ENCODE measurements at regions of chrX and their contacts with region 1.

Region 1: DNA sequence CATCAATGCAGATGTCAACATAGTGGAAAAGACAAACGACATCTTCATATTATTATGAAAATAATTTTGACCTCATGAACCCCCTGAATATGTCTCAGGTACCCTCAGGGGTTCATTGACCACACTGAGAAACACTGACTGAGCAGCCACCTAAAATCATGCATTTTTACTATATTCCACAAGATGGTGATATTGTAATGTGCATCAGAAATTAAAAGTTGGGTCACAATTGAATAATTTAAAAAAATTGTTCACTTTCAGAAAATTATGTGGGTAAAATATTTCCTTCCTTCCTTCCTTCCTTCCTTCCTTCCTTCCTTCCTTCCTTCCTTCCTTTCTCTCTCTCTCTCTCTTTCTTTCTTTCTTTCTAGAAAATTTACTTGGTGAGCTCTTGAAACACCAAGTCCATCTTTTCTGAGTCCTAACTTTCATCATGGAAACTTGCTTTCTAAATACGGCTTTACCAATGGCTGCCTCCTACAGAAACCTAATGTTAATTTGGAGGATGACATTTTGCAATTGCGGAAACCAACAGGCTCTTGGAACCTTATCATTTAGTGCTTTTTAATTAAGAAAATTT is 103.6 kb downstream of the RTL3 start:
- DNase-seq: peak; percentile 1
- H3K4me3 Mint-ChIP-seq: no peak overlapping the region
- H3K27ac Mint-ChIP-seq: no peak overlapping the region
- H3K4me1 Mint-ChIP-seq: no peaks in the 10 kb centered on the region
- H3K27me3 Mint-ChIP-seq: no peaks in the 10 kb centered on the region
- CTCF ChIP-seq: peak; percentile 44

Region 2: DNA sequence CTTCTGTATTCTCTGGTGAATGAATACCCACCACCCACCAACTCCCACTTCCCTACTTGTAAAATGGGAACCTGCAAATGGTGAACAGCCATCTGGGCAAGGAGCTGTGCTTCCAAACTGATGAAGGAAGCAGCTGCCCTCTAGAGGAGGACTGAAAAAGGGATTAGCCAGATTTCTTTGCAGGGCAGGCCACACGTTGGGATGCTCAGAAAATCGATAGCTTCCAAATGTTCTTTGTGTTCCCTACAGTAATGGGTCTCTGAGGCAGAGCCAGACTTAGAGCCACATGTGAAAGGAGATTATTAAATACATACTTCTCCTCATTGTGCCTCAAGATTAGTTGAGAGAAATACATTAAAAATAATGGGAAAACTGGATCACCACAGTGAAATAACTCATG is 152.8 kb after region 1 on chrX:
- CTCF ChIA-PET with region 1: no interaction called
- POLR2A ChIA-PET with region 1: no interaction called
- intact Hi-C with region 1: loop called (anchors 5 kb)
- DNase-seq: peak; percentile 24
- H3K4me3 Mint-ChIP-seq: no peak overlapping the region
- H3K27ac Mint-ChIP-seq: no peak overlapping the region
- H3K4me1 Mint-ChIP-seq: no peaks in the 10 kb centered on the region
- H3K27me3 Mint-ChIP-seq: no peaks in the 10 kb centered on the region
- CTCF ChIP-seq: peak; percentile 19

Region 3: GRCh38 chrX:78886550-78886949 is 331.1 kb after region 1 on chrX:
- CTCF ChIA-PET with region 1: interaction called, 12 read pairs
- POLR2A ChIA-PET with region 1: no interaction called
- intact Hi-C with region 1: loop called (anchors 1 kb)
- DNase-seq: peak; percentile 19
- H3K4me3 Mint-ChIP-seq: no peak overlapping the region
- H3K27ac Mint-ChIP-seq: no peak overlapping the region
- H3K4me1 Mint-ChIP-seq: no peaks in the 10 kb centered on the region
- H3K27me3 Mint-ChIP-seq: no peaks in the 10 kb centered on the region
- CTCF ChIP-seq: peak; percentile 28

Region 4: DNA sequence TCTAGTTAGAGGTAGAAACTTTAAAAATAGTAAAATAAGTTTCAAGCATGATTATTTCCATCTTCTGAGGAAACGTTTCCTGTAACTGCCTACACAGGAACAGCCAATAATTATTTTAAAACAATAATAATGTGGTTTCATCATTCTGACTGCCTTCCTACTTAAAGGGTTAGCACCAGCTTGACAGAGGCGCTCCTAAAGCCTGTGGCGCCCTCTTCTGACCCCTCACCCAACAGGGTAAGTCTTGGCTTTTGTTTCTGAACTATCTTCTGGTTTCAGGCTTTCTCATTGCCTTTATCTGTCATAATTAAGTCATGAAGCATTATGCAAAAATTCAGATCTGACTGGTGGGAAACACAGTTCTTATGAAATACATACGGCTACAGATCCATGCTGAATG is 714.9 kb after region 1 on chrX:
- CTCF ChIA-PET with region 1: no interaction called
- POLR2A ChIA-PET with region 1: no interaction called
- intact Hi-C with region 1: loop called (anchors 2 kb)
- DNase-seq: peak; percentile 41
- H3K4me3 Mint-ChIP-seq: no peak overlapping the region
- H3K27ac Mint-ChIP-seq: no peak overlapping the region
- H3K4me1 Mint-ChIP-seq: no peaks in the 10 kb centered on the region
- H3K27me3 Mint-ChIP-seq: no peaks in the 10 kb centered on the region
- CTCF ChIP-seq: peak; percentile 24

Region 5: GRCh38 chrX:79412972-79413371 is 857.5 kb after region 1 on chrX:
- CTCF ChIA-PET with region 1: interaction called, 20 read pairs
- POLR2A ChIA-PET with region 1: interaction called, 3 read pairs
- intact Hi-C with region 1: loop called (anchors 2 kb)
- DNase-seq: peak; percentile 31
- H3K4me3 Mint-ChIP-seq: peak overlapping the region; percentile 64
- H3K27ac Mint-ChIP-seq: no peak overlapping the region
- H3K4me1 Mint-ChIP-seq: peaks cover 7% of the 10 kb centered on the region
- H3K27me3 Mint-ChIP-seq: peaks cover 2% of the 10 kb centered on the region
- CTCF ChIP-seq: peak; percentile 36